ENCODE measurements at regions of chr1 and their contacts with region 1.

Region 1: GRCh38 chr1:64268653-64269557 is 65.5 kb downstream of the UBE2U start:
- DNase-seq: peak; percentile 72
- H3K4me3 ChIP-seq: no peak overlapping the region
- H3K27ac ChIP-seq: no peak overlapping the region
- H3K4me1 ChIP-seq: no peaks in the 10 kb centered on the region
- CTCF ChIP-seq: peak; percentile 83

Region 2: GRCh38 chr1:64282354-64282753 is 13.4 kb after region 1 on chr1:
- CTCF ChIA-PET with region 1: no interaction called
- POLR2A ChIA-PET with region 1: no interaction called
- intact Hi-C with region 1: no loop called
- DNase-seq: no peak
- H3K4me3 ChIP-seq: no peak overlapping the region
- H3K27ac ChIP-seq: no peak overlapping the region
- H3K4me1 ChIP-seq: no peaks in the 10 kb centered on the region
- CTCF ChIP-seq: no peak

Region 3: DNA sequence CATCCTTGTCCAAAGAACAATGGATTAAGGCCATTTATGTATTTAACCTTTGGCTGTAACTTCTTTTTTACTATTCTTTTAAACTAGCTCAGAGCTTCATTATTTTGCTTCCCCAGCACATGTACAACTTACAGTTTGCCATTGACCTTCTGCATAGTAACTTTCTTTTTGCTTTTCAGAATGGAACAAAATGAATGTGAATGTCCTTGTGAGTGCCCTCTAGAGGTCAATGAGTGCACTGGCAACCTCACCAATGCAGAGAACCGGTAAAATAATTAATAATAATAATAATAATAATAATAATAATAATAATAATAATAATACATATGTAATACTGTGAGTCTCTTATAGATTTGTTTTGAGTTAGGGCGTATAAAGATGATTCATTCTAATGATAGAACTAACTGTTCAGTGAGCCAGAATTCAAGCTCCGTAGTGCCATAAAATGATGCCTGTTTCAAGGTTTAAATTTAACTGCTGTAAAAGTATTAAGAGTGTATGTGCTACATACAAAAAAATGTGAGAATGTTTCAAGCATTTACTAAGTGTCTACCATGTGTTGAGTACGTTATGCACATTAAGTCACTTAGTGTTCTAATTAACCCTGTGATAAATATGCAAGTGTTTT is 406.9 kb after region 1 on chr1:
- CTCF ChIA-PET with region 1: no interaction called
- POLR2A ChIA-PET with region 1: no interaction called
- intact Hi-C with region 1: loop called (anchors 5 kb)
- DNase-seq: peak; percentile 13
- H3K4me3 ChIP-seq: no peak overlapping the region
- H3K27ac ChIP-seq: no peak overlapping the region
- H3K4me1 ChIP-seq: no peaks in the 10 kb centered on the region
- CTCF ChIP-seq: peak; percentile 81

Region 4: GRCh38 chr1:64823691-64824476 is 555.0 kb after region 1 on chr1:
- CTCF ChIA-PET with region 1: no interaction called
- POLR2A ChIA-PET with region 1: interaction called, 3 read pairs
- intact Hi-C with region 1: loop called (anchors 2 kb)
- DNase-seq: peak; percentile 68
- H3K4me3 ChIP-seq: no peak overlapping the region
- H3K27ac ChIP-seq: no peak overlapping the region
- H3K4me1 ChIP-seq: peaks cover 3% of the 10 kb centered on the region
- CTCF ChIP-seq: peak; percentile 93

Region 5: DNA sequence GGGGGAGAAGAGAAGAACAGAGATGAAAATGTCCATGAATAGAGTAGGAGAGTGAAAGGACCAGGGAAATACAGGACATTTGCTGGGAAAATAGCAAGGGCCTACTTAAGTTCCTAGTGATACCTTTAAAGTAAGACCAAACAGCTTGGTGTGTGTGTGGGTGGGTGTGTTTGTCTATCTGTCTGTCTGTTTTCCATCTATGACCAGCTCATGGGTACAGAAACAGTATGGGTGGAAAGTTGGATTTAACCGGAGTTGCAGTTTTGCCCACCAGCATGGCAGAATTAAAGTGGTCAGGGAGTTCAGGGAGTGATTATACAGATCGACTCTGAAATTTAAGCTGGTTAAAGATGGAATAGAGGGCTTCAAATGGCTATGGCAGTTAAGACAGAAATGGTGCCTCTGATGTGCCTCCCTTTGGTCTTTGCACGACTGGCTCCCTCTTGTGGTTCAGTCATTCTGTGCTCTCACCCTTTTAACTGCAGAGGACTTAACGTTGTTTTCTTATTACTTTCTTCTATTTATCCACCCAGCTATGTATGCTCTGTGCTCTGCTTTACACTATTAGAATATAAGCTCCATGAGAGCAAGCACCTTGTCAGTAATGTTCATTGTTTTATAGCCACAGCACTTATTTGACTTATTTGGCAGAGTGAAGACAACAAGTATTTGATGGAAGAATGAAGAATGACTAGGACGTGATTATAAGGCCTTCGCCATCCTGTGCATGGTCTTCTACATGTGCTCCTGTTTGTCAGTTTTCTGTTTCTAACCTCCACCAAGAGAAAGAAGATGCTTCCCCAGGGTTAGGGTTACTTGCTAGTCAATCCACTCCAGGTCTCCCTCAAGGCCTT is 806.4 kb after region 1 on chr1:
- CTCF ChIA-PET with region 1: no interaction called
- POLR2A ChIA-PET with region 1: no interaction called
- intact Hi-C with region 1: loop called (anchors 10 kb)
- DNase-seq: peak; percentile 78
- H3K4me3 ChIP-seq: no peak overlapping the region
- H3K27ac ChIP-seq: no peak overlapping the region
- H3K4me1 ChIP-seq: no peaks in the 10 kb centered on the region
- CTCF ChIP-seq: peak; percentile 93

Region 6: DNA sequence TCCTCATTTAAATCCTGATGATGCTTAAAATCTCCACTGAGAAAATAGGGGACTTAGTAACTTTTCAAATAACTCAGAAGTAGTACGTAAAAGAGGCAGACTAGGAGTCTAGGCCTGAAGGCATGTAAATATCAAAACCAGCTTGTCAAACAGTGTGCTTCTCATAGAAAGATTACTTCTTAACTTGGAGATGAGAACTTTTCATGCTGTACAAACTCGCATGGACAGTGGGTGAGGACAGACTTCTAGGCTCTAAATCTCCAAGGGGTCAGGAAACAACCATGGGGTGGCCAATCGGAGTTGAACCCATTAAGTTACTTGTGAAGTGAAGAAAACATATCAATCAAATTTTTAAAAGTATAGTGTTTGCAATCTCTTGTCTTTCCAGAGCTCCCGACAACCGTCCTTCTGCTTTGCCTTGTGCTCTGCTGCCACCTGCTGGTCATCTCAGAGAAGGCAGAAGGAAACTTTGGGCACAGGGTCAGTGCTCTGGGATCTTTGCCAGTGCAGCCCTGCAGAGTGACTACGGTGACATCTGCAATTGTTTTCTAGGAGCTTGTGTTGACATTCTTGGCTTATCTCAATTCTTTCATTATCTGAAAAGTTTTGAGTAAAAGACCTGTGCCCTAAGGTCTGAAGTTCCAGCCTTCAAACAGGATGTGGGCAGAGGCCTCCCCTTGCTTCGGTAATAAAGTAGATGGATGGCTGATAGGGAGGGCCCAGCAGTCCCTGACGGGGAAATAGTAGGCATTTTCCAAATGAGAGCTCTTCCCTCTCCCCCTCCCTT is 1418.7 kb after region 1 on chr1:
- CTCF ChIA-PET with region 1: no interaction called
- POLR2A ChIA-PET with region 1: no interaction called
- intact Hi-C with region 1: loop called (anchors 5 kb)
- DNase-seq: peak; percentile 61
- H3K4me3 ChIP-seq: no peak overlapping the region
- H3K27ac ChIP-seq: no peak overlapping the region
- H3K4me1 ChIP-seq: no peaks in the 10 kb centered on the region
- CTCF ChIP-seq: peak; percentile 87